Heart right ventricle (tissue), 16 donors: ENCODE measurements at regions of chr18 and their contacts with region 1.

Region 1: GRCh38 chr18:36650906-36651305 is 177.9 kb downstream of the TPGS2 start:
- DNase-seq: no peak
- ATAC-seq: no peak
- H3K4me3 ChIP-seq: no peak overlapping the region
- H3K27ac ChIP-seq: no peak overlapping the region
- H3K4me1 ChIP-seq: peaks cover 0 to 20% (median 4%) of the 10 kb centered on the region in 9 donors
- H3K27me3 ChIP-seq: no peaks in the 10 kb centered on the region
- CTCF ChIP-seq: no peak

Region 2: GRCh38 chr18:36309436-36310391 is 341.2 kb before region 1 on chr18:
- intact Hi-C with region 1: no loop called
- DNase-seq: no peak
- ATAC-seq: peak; percentile 13 to 77 (median 46)
- H3K4me3 ChIP-seq: no peak overlapping the region
- H3K27ac ChIP-seq: peak overlapping the region in 7 of 10 donors; percentile 27 to 52 (median 33)
- H3K4me1 ChIP-seq: peaks cover 2 to 92% (median 56%) of the 10 kb centered on the region in 9 donors
- H3K27me3 ChIP-seq: peaks cover 0 to 15% (median 6%) of the 10 kb centered on the region in 7 donors
- CTCF ChIP-seq: no peak

Region 3: DNA sequence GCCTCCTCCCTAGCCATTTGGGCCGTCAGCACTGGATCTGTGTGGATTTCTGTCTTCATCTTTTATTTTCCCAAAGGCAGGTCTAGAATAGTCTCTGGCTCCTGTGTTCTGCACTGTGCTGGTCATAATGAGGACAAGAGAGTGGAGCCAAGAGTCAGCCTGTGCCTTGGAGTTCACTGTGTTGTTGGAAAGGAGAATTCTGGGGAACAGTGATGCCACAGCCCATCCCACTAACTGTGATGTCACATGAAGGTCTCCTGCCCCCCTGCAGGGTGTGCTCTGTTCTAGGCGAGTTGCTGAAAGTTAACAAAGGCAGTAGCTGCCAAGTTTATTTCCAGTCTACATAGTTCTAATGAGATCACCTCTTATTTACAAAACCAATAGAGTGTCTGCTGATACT is 70.6 kb before region 1 on chr18:
- intact Hi-C with region 1: loop called in 1 of 10 experiments (anchors 10 kb)
- DNase-seq: peak in 1 of 2 donors; percentile 52
- ATAC-seq: peak; percentile 82 to 95 (median 88)
- H3K4me3 ChIP-seq: no peak overlapping the region
- H3K27ac ChIP-seq: peak overlapping the region in 9 of 10 donors; percentile 44 to 84 (median 76)
- H3K4me1 ChIP-seq: peaks cover 0 to 37% (median 18%) of the 10 kb centered on the region in 9 donors
- H3K27me3 ChIP-seq: no peaks in the 10 kb centered on the region
- CTCF ChIP-seq: peak in 5 of 9 donors; percentile 11 to 43 (median 29)

Region 4: DNA sequence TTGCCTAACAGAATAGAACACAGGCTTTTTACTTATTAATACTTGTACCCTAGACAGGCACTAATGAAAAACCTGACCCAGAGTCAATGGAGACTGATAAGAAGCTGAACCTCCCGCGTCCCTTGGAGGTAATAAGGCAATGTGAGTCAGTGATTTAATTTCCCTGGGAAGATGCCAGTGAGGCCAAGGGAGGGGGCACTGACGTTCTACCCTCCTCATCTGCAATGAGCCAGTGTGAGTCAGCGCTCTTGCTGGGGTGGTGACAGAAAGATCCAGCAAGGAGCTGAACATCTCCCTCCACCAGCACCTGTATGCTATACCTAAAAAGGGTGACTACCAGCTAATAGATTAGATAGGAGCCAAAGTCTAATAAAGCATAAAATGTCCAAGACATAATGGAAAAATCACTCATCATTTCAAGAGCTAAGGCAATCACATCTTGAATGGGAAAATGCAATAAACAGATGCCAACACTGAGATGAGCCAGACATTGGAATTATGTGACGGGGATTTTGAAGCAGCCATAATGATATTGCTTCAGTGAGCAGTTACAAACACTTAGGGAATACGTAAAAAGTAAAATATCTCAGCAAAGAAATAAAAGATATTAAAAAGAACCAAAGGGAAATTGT is 61.0 kb after region 1 on chr18:
- intact Hi-C with region 1: no loop called
- DNase-seq: peak; percentile 19 to 64
- ATAC-seq: peak in 7 of 8 donors; percentile 75 to 95 (median 86)
- H3K4me3 ChIP-seq: no peak overlapping the region
- H3K27ac ChIP-seq: peak overlapping the region in 7 of 10 donors; percentile 26 to 78 (median 68)
- H3K4me1 ChIP-seq: peaks cover 2 to 55% (median 18%) of the 10 kb centered on the region in 9 donors
- H3K27me3 ChIP-seq: no peaks in the 10 kb centered on the region
- CTCF ChIP-seq: no peak

Region 5: GRCh38 chr18:37396971-37397720 is 746.2 kb after region 1 on chr18:
- intact Hi-C with region 1: loop called in 1 of 10 experiments (anchors 5 kb)
- DNase-seq: no peak
- ATAC-seq: no peak
- H3K4me3 ChIP-seq: no peak overlapping the region
- H3K27ac ChIP-seq: no peak overlapping the region
- H3K4me1 ChIP-seq: peaks cover 0 to 16% (median 11%) of the 10 kb centered on the region in 9 donors
- H3K27me3 ChIP-seq: peaks cover 0 to 22% (median 0%) of the 10 kb centered on the region in 7 donors
- CTCF ChIP-seq: no peak